Ovary (tissue), 10 donors: ENCODE measurements at regions of chr7 and their contacts with region 1.

Region 1: DNA sequence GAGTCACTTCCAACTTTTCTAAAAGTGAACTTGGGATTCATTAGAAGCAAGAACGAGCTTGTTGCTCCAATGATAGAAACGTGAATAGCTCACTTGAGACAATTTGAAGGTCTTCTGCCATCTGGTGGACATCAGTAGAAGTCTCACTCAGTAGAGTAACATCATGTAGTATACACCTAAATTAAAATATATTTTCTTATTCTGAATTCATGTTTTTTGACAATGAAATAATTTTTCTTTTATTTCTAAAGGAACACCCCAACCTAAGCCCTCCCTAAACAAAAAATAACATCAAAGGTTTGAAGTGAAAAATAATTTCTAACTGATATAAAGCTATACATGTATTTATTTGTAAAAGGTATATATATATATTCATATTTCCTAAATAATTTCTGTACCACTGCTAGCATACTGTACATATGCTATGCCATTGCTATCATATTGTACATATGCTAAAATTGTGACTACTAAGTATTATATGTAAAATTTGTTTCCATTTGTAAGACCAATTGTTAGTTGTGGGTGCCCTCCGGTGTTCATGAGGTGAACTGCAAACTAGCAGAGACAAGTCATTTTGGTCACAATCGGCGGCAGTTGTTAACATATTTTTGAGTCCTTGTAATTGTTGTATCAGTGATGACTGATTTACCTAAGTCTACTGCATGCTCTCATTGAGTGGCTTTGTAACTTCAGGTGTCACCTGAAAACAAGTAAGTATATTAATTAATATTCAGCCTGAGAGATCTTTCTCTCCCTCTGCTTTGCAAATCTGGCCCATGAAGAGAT is 121.9 kb downstream of the PTPRZ1 start:
- DNase-seq: peak; percentile 20 to 50 (median 42)
- H3K4me3 ChIP-seq: no peak overlapping the region
- H3K27ac ChIP-seq: no peak overlapping the region
- H3K4me1 ChIP-seq: no peaks in the 10 kb centered on the region
- H3K27me3 ChIP-seq: no peaks in the 10 kb centered on the region
- CTCF ChIP-seq: peak in 2 of 3 donors; percentile 26 to 28
- EP300 ChIP-seq: no peak
- POLR2A ChIP-seq: no peak

Region 2: DNA sequence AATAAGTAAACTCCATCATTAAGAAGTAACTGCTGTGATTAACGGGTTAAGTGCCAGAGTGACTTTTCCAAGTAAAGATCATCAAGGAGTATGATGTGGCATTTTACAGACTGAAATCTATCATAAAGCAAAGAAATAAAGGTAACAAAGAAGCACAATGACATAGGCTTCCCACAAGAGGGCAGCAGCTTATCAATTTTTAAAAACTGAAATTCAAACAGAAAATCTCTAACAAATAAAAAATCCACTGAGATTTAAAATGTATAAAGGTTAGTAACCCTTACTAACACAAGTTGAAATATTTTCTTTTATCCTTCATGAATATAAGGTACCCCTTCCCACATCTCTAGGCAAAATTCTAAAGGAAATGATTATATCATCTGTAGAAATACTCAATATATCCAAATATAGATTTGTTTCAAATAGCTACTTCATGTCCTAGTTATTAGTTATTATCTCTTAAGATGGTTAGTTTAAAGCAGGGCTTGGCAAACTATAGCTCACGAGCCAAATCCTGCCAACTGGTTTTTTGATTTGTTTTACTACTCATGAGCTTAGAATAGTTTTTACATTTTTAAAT is 627.9 kb before region 1 on chr7:
- intact Hi-C with region 1: loop called in 1 of 4 experiments (anchors 5 kb)
- DNase-seq: peak in 1 of 5 donors; percentile 23
- H3K4me3 ChIP-seq: no peak overlapping the region
- H3K27ac ChIP-seq: no peak overlapping the region
- H3K4me1 ChIP-seq: no peaks in the 10 kb centered on the region
- H3K27me3 ChIP-seq: no peaks in the 10 kb centered on the region
- CTCF ChIP-seq: peak; percentile 39 to 81 (median 59)
- EP300 ChIP-seq: no peak
- POLR2A ChIP-seq: no peak

Region 3: GRCh38 chr7:121752706-121753105 is 242.1 kb before region 1 on chr7:
- intact Hi-C with region 1: loop called in 1 of 4 experiments (anchors 10 kb)
- DNase-seq: no peak
- H3K4me3 ChIP-seq: no peak overlapping the region
- H3K27ac ChIP-seq: no peak overlapping the region
- H3K4me1 ChIP-seq: no peaks in the 10 kb centered on the region
- H3K27me3 ChIP-seq: no peaks in the 10 kb centered on the region
- CTCF ChIP-seq: no peak
- EP300 ChIP-seq: no peak
- POLR2A ChIP-seq: no peak